ENCODE measurements at regions of chr10 and their contacts with region 1.

Region 1: GRCh38 chr10:43156590-43157341 is 18.5 kb downstream of the CSGALNACT2 start:
- DNase-seq: no peak
- H3K4me3 ChIP-seq: no peak overlapping the region
- H3K27ac ChIP-seq: no peak overlapping the region; a peak in 1 of 4 replicates
- H3K4me1 ChIP-seq: peaks cover 0 to 5% of the 10 kb centered on the region in 2 experiments; a peak in 2 of 4 replicates
- H3K27me3 ChIP-seq: no peaks in the 10 kb centered on the region
- CTCF ChIP-seq: no peak
- EP300 ChIP-seq: no peak
- RAD21 ChIP-seq: no peak

Region 2: DNA sequence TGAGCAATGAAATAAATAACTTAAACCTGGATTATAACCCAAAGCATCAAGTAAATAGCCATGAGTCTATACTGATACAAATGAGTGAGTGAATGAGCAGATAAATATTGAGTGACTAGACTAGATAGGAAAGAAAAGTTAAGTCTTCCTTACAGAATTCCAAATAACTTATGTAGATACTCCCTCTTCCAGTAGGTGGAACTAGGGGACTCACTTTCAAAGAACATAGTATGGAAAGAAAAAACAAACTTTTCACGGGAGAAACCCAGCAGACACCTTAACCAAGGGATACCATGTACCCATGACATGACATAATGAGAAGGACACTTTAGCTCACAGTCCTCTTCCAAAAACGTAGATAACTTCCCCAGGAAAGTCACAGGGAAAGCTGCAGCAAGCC is 13.7 kb after region 1 on chr10:
- CTCF ChIA-PET with region 1: interaction called, 10 read pairs
- POLR2A ChIA-PET with region 1: no interaction called
- DNase-seq: no peak
- H3K4me3 ChIP-seq: no peak overlapping the region
- H3K27ac ChIP-seq: no peak overlapping the region
- H3K4me1 ChIP-seq: peaks cover 10 to 11% of the 10 kb centered on the region in 2 experiments; a peak in 3 of 4 replicates
- H3K27me3 ChIP-seq: no peaks in the 10 kb centered on the region
- CTCF ChIP-seq: peak; percentile 27; the same call in 1 of the 2 replicates
- EP300 ChIP-seq: no peak
- RAD21 ChIP-seq: no peak

Region 3: DNA sequence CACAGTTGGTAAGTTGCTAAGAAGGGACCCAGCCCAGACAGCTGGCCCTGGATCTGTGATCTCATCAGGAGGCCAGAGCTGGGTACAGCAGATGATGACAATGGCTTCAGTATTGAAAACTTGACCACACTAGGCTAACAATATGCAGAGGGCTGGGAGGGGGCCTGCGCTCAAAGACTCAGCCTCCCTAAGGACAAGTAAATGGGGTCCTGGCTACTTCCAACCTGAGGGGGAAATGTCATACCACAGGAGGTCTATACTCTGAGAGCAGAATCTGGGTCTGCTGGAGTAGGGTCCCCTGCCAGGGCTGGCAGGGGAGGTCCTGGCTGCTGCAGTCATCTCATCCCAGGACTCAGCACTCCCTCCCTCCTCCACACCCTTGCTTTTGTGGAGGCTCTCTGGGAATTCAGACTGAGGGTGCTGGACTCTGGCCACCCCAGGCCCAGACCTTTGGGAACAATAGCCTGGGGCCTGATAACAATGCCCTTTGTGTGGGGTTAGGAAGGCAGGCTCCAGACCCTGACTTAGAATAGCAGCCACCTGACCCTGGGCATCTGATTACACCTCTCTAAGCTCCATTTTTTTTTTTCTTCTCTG is 216.1 kb after region 1 on chr10:
- CTCF ChIA-PET with region 1: no interaction called
- POLR2A ChIA-PET with region 1: no interaction called
- DNase-seq: peak; percentile 21
- H3K4me3 ChIP-seq: no peak overlapping the region
- H3K27ac ChIP-seq: no peak overlapping the region
- H3K4me1 ChIP-seq: no peaks in the 10 kb centered on the region
- H3K27me3 ChIP-seq: no peaks in the 10 kb centered on the region
- CTCF ChIP-seq: no peak
- EP300 ChIP-seq: no peak
- RAD21 ChIP-seq: no peak